ENCODE measurements at regions of chr1 and their contacts with region 1.

Region 1: GRCh38 chr1:205273551-205273982 is 45.8 kb downstream of the TMCC2 start:
- DNase-seq: peak; percentile 81 to 92 (median 86)
- ATAC-seq: peak; percentile 83
- H3K4me3 ChIP-seq: peak overlapping the region; percentile 7
- H3K4me3 Mint-ChIP-seq: peak overlapping the region; percentile 81
- H3K27ac ChIP-seq: no peak overlapping the region
- H3K27ac Mint-ChIP-seq: peak overlapping the region; percentile 67
- H3K4me1 ChIP-seq: peaks cover 48% of the 10 kb centered on the region
- H3K4me1 Mint-ChIP-seq: peaks cover 40% of the 10 kb centered on the region
- H3K27me3 ChIP-seq: no peaks in the 10 kb centered on the region
- H3K27me3 Mint-ChIP-seq: no peaks in the 10 kb centered on the region
- CTCF ChIP-seq: peak; percentile 97

Region 2: DNA sequence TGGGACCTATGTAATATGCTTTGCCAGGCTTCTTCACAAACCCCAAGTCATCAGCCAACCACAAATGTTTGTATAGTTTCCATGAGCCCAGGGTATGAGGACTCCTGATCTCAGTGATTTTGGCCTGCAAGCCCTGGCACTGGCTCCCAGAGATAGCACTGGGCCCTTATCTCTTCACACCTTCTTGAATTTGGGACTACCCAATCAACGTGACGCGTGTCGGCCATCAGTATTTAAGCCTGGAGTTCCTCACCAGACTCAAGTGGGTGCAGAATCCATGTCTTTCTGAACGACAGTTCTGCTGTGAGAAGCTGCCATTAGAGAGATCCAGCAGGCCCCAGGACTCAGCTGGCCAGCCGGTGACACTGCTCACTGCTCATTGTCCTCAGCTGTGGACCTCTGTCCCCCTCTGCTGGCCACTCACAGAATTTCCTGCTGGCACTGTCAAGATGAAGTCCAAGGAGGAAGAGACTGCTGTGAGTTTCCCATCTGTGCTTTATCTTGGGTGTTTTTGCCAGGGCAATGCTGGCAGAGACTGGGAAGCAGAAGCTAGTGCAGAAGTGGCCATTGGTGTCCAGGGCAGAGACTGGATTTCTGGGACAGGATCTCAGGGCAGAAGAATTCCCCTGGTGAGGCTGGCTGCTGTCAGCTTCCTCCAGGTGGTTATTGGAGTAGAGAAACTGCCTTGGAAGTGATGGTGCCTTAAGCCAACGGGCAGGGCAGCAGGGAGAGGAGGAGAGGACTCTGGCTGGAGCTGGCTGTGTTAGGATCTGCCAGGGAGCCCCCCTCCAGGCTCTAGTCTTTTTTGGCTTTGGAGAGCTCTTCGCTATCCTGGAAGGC is 17.4 kb before region 1 on chr1:
- CTCF ChIA-PET with region 1: interaction called, 14 read pairs
- POLR2A ChIA-PET with region 1: no interaction called
- intact Hi-C with region 1: no loop called
- DNase-seq: peak; percentile 75 to 90 (median 83)
- ATAC-seq: peak; percentile 99
- H3K4me3 ChIP-seq: no peak overlapping the region
- H3K4me3 Mint-ChIP-seq: no peak overlapping the region
- H3K27ac ChIP-seq: no peak overlapping the region
- H3K27ac Mint-ChIP-seq: no peak overlapping the region
- H3K4me1 ChIP-seq: peaks cover 6% of the 10 kb centered on the region
- H3K4me1 Mint-ChIP-seq: no peaks in the 10 kb centered on the region
- H3K27me3 ChIP-seq: peaks cover 0 to 2% of the 10 kb centered on the region in 2 experiments
- H3K27me3 Mint-ChIP-seq: no peaks in the 10 kb centered on the region
- CTCF ChIP-seq: peak; percentile 92

Region 3: GRCh38 chr1:205300886-205301821 is 27.6 kb after region 1 on chr1:
- CTCF ChIA-PET with region 1: interaction called, 14 read pairs
- POLR2A ChIA-PET with region 1: interaction called, 6 read pairs
- intact Hi-C with region 1: no loop called
- DNase-seq: no peak
- ATAC-seq: no peak
- H3K4me3 ChIP-seq: no peak overlapping the region
- H3K4me3 Mint-ChIP-seq: no peak overlapping the region
- H3K27ac ChIP-seq: peak overlapping the region in 1 of 2 donors; percentile 7
- H3K27ac Mint-ChIP-seq: peak overlapping the region; percentile 67
- H3K4me1 ChIP-seq: peaks cover 32% of the 10 kb centered on the region
- H3K4me1 Mint-ChIP-seq: peaks cover 60% of the 10 kb centered on the region
- H3K27me3 ChIP-seq: no peaks in the 10 kb centered on the region
- H3K27me3 Mint-ChIP-seq: no peaks in the 10 kb centered on the region
- CTCF ChIP-seq: no peak

Region 4: DNA sequence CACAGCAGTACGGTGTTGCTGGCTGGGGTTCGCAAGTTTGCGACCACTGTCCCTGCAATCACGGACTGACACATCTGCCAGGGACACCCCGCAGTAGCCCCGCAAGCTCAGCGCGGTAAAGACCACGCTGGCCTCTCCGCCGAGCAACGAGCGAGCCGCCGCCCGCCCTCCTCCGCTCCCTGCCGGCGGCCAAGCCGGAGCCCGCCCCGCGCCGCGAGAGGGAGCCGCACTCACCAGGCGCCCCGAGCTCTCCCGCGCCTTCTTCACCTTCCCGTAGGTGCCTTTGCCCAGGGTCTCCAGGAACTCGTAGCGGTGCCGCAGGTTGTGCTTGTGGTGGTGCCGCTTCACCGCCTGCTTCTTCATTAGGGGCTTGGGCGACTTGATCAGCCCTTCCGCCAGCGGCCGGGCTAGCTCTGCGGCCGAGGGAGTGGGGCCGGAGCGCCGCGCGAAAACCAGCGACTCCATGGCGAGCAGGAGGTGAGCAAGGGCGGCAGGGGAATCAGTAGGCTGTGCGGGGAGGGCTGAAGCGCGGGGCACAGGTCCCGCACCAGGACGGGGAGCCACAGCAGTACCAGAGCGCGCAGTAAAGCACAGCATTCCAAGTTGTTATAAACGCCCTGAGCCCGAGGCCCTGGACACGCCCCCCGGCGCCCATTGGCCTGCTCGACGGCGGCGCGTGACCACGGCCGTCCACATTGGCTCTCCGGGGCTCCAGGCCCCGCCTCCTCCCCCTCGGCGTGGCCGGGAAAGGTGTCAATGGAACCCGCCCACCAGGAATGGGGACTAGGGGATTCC is 47.8 kb after region 1 on chr1 and contains the start of gene NUAK2:
- CTCF ChIA-PET with region 1: interaction called, 322 read pairs
- POLR2A ChIA-PET with region 1: interaction called, 918 read pairs
- intact Hi-C with region 1: loop called (anchors 1 kb)
- DNase-seq: peak; percentile 68 to 93 (median 86)
- ATAC-seq: peak; percentile 88
- H3K4me3 ChIP-seq: peak within 1 kb of the TSS; percentile 78
- H3K4me3 Mint-ChIP-seq: peak within 1 kb of the TSS; percentile 98
- H3K27ac ChIP-seq: peak within 1 kb of the TSS in 1 of 2 donors; percentile 87
- H3K27ac Mint-ChIP-seq: peak within 1 kb of the TSS; percentile 99
- H3K4me1 ChIP-seq: peaks cover 67% of the 10 kb centered on the region
- H3K4me1 Mint-ChIP-seq: peaks cover 71% of the 10 kb centered on the region
- H3K27me3 ChIP-seq: no peaks in the 10 kb centered on the region
- H3K27me3 Mint-ChIP-seq: no peaks in the 10 kb centered on the region
- CTCF ChIP-seq: peak; percentile 44
- total RNA-seq, gene NUAK2: 14.9 to 15.3 TPM

Region 5: GRCh38 chr1:205354259-205354904 is 80.8 kb after region 1 on chr1:
- CTCF ChIA-PET with region 1: interaction called, 41 read pairs
- POLR2A ChIA-PET with region 1: interaction called, 8 read pairs
- intact Hi-C with region 1: no loop called
- DNase-seq: peak; percentile 34 to 82 (median 52)
- ATAC-seq: peak; percentile 83
- H3K4me3 ChIP-seq: no peak overlapping the region
- H3K4me3 Mint-ChIP-seq: no peak overlapping the region
- H3K27ac ChIP-seq: no peak overlapping the region
- H3K27ac Mint-ChIP-seq: no peak overlapping the region
- H3K4me1 ChIP-seq: no peaks in the 10 kb centered on the region
- H3K4me1 Mint-ChIP-seq: no peaks in the 10 kb centered on the region
- H3K27me3 ChIP-seq: peaks cover 6 to 11% of the 10 kb centered on the region in 2 experiments
- H3K27me3 Mint-ChIP-seq: peaks cover 16% of the 10 kb centered on the region
- CTCF ChIP-seq: peak; percentile 95

Region 6: DNA sequence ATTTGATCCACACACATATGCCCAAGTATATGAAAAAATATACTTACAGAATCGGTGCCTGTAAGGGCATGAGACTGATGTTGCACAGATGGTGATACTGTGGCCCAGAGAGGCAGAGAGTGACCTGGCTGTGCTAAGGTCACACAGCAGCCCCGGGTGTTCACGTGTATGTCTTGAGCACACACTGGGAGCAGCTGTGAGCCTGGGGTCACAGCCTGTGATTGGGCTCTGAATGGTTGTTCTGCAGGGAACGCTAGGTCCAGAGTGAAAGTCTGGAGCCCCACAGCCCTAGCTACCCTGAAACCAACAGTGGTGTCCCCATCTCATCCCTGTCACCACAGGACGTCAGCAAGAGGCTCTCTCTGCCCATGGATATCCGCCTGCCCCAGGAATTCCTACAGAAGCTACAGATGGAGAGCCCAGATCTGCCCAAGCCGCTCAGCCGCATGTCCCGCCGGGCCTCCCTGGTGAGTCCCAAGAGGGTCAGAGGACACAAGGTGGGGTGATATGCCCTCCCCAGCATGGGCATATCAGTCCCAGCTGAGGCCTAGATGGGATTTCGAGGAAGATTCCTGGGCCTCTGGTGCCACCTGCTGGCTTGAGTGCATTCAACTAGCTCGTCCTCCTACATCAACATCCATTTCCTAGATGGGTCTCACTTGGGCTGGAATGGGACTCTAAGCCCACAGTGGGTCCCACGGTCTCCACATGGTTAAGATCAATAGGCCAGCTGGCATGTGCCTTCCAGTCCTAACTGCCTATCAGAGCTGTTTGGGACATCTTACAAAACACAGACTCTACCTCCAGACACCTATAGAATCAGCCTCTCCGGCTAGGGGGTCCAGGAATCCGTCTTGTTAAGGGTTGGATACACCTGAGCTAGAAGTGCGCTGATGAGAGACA is 250.6 kb after region 1 on chr1:
- CTCF ChIA-PET with region 1: interaction called, 12 read pairs
- POLR2A ChIA-PET with region 1: interaction called, 5 read pairs
- intact Hi-C with region 1: loop called (anchors 1 kb)
- DNase-seq: peak; percentile 48 to 83 (median 68)
- ATAC-seq: peak; percentile 61
- H3K4me3 ChIP-seq: no peak overlapping the region
- H3K4me3 Mint-ChIP-seq: no peak overlapping the region
- H3K27ac ChIP-seq: no peak overlapping the region
- H3K27ac Mint-ChIP-seq: no peak overlapping the region
- H3K4me1 ChIP-seq: peaks cover 4% of the 10 kb centered on the region
- H3K4me1 Mint-ChIP-seq: no peaks in the 10 kb centered on the region
- H3K27me3 ChIP-seq: peaks cover 0 to 4% of the 10 kb centered on the region in 2 experiments
- H3K27me3 Mint-ChIP-seq: no peaks in the 10 kb centered on the region
- CTCF ChIP-seq: peak; percentile 74